Lower leg skin (tissue), 4 donors: ENCODE measurements at regions of chr4 and their contacts with region 1.

Region 1: GRCh38 chr4:89598602-89599001 is 238.4 kb downstream of the SNCA start:
- DNase-seq: no peak
- H3K4me3 ChIP-seq: no peak overlapping the region
- CTCF ChIP-seq: no peak
- POLR2A ChIP-seq: no peak

Region 2: GRCh38 chr4:89894649-89895550 is 296.3 kb after region 1 on chr4 and contains the start of gene MMRN1:
- intact Hi-C with region 1: loop called (anchors 5 kb)
- DNase-seq: no peak
- H3K4me3 ChIP-seq: no peak within 1 kb of the TSS
- CTCF ChIP-seq: no peak
- POLR2A ChIP-seq: no peak
- total RNA-seq, gene MMRN1: 10.3 to 26.5 (median 20.5) TPM

Region 3: GRCh38 chr4:89998469-89999011 is 399.9 kb after region 1 on chr4:
- intact Hi-C with region 1: no loop called
- DNase-seq: no peak
- H3K4me3 ChIP-seq: no peak overlapping the region
- CTCF ChIP-seq: no peak
- POLR2A ChIP-seq: no peak